ENCODE measurements at regions of chr1 and their contacts with region 1.

Region 1: GRCh38 chr1:89201106-89201794 is 2.5 kb upstream of the GBP4 start:
- DNase-seq: no peak
- H3K4me3 ChIP-seq: no peak overlapping the region
- H3K27ac ChIP-seq: no peak overlapping the region
- H3K4me1 ChIP-seq: no peaks in the 10 kb centered on the region
- H3K27me3 ChIP-seq: no peaks in the 10 kb centered on the region
- CTCF ChIP-seq: no peak

Region 2: DNA sequence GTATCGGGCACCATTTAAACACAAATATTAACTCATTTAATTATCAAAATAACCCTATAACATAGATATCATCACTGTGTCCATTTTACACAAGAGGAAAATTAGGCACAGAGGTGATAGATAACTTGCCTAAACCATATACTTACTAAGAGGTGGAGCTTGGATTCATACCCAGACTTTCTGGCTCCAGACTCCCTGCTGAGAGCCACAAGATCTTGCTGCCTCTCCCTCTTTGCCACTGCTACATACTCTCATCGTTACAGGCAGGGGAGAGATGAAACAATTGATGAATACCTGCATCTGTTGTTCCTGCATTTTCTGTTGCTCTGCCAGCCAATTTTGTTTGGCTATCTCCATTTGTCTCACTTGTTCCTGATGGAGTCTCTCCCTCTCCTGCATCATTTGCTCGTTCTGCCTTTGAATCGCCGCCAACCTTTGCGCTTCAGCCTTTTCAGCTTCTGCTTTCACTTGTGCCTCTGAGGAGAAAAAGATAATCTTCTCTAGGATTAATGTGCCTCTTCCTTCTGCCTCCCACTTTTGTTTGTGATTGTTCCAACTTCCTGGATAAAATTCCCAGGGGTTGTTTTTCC is 60.8 kb after region 1 on chr1:
- intact Hi-C with region 1: loop called (anchors 10 kb)
- DNase-seq: peak in 1 of 5 donors; percentile 17
- H3K4me3 ChIP-seq: peak overlapping the region in 1 of 3 donors; percentile 10
- H3K27ac ChIP-seq: no peak overlapping the region
- H3K4me1 ChIP-seq: peaks cover 0 to 4% (median 2%) of the 10 kb centered on the region in 3 donors
- H3K27me3 ChIP-seq: no peaks in the 10 kb centered on the region
- CTCF ChIP-seq: no peak